ENCODE measurements at regions of chr14 and their contacts with region 1.

Region 1: GRCh38 chr14:22766456-22767322 is at the start of gene OXA1L:
- DNase-seq: peak; percentile 98
- H3K4me3 Mint-ChIP-seq: peak within 1 kb of the TSS; percentile 94
- H3K27ac Mint-ChIP-seq: peak within 1 kb of the TSS; percentile 96
- H3K4me1 Mint-ChIP-seq: peaks cover 27% of the 10 kb centered on the region
- H3K27me3 Mint-ChIP-seq: no peaks in the 10 kb centered on the region
- total RNA-seq, gene OXA1L: 119 and 126 TPM in 2 replicates

Region 2: GRCh38 chr14:22598099-22598899 is 168.4 kb before region 1 on chr14 and contains the start of gene ABHD4:
- intact Hi-C with region 1: loop called (anchors 1 kb)
- DNase-seq: peak; percentile 94
- H3K4me3 Mint-ChIP-seq: peak within 1 kb of the TSS; percentile 94
- H3K27ac Mint-ChIP-seq: peak within 1 kb of the TSS; percentile 89
- H3K4me1 Mint-ChIP-seq: peaks cover 39% of the 10 kb centered on the region
- H3K27me3 Mint-ChIP-seq: peaks cover 6% of the 10 kb centered on the region
- total RNA-seq, gene ABHD4: 9.7 and 10.3 TPM in 2 replicates

Region 3: GRCh38 chr14:22713631-22713950 is 53.1 kb before region 1 on chr14:
- intact Hi-C with region 1: loop called (anchors 1 kb)
- DNase-seq: no peak
- H3K4me3 Mint-ChIP-seq: peak overlapping the region; percentile 88
- H3K27ac Mint-ChIP-seq: peak overlapping the region; percentile 89
- H3K4me1 Mint-ChIP-seq: peaks cover 14% of the 10 kb centered on the region
- H3K27me3 Mint-ChIP-seq: peaks cover 19% of the 10 kb centered on the region

Region 4: GRCh38 chr14:22829661-22830442 is 63.2 kb after region 1 on chr14 and contains the start of gene MRPL52:
- intact Hi-C with region 1: loop called (anchors 1 kb)
- DNase-seq: peak; percentile 96
- H3K4me3 Mint-ChIP-seq: peak within 1 kb of the TSS; percentile 98
- H3K27ac Mint-ChIP-seq: peak within 1 kb of the TSS; percentile 95
- H3K4me1 Mint-ChIP-seq: peaks cover 19% of the 10 kb centered on the region
- H3K27me3 Mint-ChIP-seq: no peaks in the 10 kb centered on the region
- total RNA-seq, gene MRPL52: 189 and 194 TPM in 2 replicates

Region 5: GRCh38 chr14:22918804-22919600 is 152.3 kb after region 1 on chr14 and contains the start of gene RBM23:
- intact Hi-C with region 1: loop called (anchors 5 kb)
- DNase-seq: peak; percentile 100
- H3K4me3 Mint-ChIP-seq: peak within 1 kb of the TSS; percentile 95
- H3K27ac Mint-ChIP-seq: peak within 1 kb of the TSS; percentile 100
- H3K4me1 Mint-ChIP-seq: peaks cover 27% of the 10 kb centered on the region
- H3K27me3 Mint-ChIP-seq: peaks cover 2% of the 10 kb centered on the region
- total RNA-seq, gene RBM23: 82.7 and 90.2 TPM in 2 replicates